AG04450 (cell line): ENCODE measurements at regions of chr10 and their contacts with region 1.

Region 1: GRCh38 chr10:116654816-116655215 is 34.1 kb downstream of the PNLIPRP2 start:
- DNase-seq: no peak
- H3K4me3 ChIP-seq: no peak overlapping the region
- H3K27ac ChIP-seq: no peak overlapping the region
- H3K27me3 ChIP-seq: peaks cover 14% of the 10 kb centered on the region
- CTCF ChIP-seq: peak; percentile 38

Region 2: DNA sequence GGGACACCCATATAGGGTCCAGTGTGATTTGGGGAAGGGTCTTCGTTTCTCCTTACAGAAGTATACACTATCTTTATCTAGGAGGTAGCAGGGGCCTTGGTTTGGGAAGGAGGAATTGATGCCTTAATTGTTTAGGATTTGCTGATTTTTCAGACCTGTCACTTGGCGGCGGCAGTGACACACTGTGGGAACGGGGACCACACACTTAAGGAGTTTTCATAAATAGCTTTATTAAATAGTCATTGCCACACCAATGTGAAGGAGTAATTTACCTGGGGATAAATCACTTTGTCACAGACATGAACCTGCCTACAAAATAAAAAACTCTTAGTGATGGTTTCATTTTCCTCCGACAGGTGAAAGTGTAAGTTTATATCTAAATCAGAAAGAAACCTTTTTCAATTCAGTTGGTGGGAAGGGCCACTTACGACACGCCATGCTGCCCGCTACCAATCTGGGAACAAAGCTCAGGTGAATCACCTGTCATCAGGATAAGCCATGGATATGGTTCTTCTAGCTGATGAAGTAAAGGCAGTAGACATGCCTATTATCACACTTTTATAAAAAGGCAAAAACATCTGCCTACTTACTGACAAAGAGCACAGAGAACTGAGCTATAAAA is 182.2 kb after region 1 on chr10:
- CTCF ChIA-PET with region 1: interaction called, 10 read pairs
- POLR2A ChIA-PET with region 1: no interaction called
- DNase-seq: no peak
- H3K4me3 ChIP-seq: no peak overlapping the region
- H3K27ac ChIP-seq: no peak overlapping the region
- H3K27me3 ChIP-seq: peaks cover 24% of the 10 kb centered on the region
- CTCF ChIP-seq: peak; percentile 38